ENCODE measurements at regions of chr11 and their contacts with region 1.

Region 1: DNA sequence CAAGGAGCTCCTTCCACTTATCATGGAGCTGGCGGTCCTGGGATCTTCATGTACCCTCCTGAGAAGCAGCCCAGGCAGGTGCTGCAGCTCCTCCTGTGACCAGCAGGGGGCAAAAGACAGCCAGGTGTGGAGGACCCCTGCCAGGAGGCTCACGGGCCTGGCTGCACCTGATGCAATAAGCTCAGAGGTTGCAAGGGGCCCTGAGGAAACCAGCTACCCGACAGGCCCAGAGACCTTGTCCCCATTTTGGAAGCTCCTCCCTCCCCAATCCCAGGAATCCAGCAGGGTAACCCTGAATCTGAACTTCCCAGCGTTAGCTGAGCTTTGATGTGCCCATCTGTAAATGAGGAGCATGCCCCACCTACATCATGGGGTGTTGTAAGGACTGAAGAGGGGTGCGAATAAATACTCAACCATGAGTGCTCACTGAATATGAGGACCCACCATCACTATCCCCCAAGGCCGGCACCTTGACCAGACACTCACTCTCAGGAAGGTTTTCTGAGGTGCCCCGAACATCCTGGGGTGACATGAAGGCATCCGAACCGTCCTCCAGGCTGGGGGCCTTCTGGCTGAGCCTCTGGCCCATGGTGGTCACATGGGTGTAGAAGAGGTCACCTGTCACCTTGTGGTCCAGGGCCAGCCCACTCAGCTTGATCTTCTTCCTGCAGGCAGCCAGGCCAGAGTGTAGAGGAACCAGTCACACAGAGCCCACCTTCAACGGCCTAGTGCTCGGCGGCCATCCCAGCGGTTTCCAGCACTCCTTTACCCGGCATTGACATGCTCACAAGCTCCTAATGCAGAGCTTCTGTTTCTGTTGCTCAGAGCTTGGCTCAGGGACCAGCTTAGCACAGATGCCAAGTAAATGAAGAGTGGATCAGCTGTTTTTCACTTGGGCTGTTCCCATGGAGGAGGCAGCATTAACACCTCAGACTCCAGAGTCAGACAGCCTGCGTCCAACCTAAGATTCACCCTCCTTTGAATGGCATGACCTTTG is 21.7 kb downstream of the SLC43A1 start:
- DNase-seq: peak; percentile 84
- H3K4me3 Mint-ChIP-seq: no peak overlapping the region
- H3K27ac Mint-ChIP-seq: peak overlapping the region; percentile 89
- H3K4me1 Mint-ChIP-seq: peaks cover 13% of the 10 kb centered on the region
- H3K27me3 Mint-ChIP-seq: no peaks in the 10 kb centered on the region

Region 2: GRCh38 chr11:57480409-57481137 is 13.2 kb before region 1 on chr11:
- CTCF ChIA-PET with region 1: interaction called, 92 read pairs
- DNase-seq: peak; percentile 86
- H3K4me3 Mint-ChIP-seq: no peak overlapping the region
- H3K27ac Mint-ChIP-seq: no peak overlapping the region
- H3K4me1 Mint-ChIP-seq: peaks cover 30% of the 10 kb centered on the region
- H3K27me3 Mint-ChIP-seq: peaks cover 83% of the 10 kb centered on the region

Region 3: DNA sequence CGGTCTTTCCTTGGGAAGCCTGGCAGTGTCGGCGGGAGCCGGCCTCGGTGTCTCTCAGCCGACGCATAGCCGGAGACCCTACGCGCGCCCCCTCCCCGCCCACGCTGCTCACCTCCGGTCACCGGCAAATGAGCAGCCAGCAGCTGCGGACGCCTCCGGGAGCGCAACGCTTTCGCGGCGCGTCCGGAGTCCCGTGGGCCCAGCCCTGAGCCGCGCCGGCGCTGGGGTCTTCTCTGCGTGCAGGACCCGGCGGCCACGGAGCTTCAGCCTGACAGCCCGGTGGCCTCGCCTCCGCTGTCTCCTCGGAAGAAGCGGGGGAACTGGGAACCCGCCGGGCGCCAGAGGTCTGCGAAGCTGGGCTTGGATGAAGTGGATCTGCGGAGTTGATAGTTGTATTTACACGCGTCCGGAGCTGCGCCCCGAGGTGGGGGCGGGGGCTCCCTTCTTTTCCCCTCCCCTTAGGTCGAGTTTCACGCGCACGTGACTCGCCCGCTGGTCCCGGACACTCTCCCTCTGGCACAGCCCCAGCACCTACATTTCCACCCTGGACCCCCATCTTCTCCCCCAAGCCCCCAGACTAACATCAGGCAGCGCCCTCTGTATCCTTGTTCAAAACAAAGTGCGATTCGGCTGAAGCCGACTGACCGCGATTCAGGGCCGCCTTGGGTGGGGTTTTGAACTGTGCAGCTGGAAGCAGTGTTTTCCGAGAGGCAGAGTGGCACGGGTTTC is 21.7 kb after region 1 on chr11 and contains the start of gene SLC43A1:
- CTCF ChIA-PET with region 1: interaction called, 115 read pairs
- DNase-seq: peak; percentile 61
- H3K4me3 Mint-ChIP-seq: peak within 1 kb of the TSS; percentile 96
- H3K27ac Mint-ChIP-seq: peak within 1 kb of the TSS; percentile 86
- H3K4me1 Mint-ChIP-seq: peaks cover 34% of the 10 kb centered on the region
- H3K27me3 Mint-ChIP-seq: peaks cover 8% of the 10 kb centered on the region

Region 4: GRCh38 chr11:57567515-57568329 is 73.9 kb after region 1 on chr11 and contains the start of gene UBE2L6:
- CTCF ChIA-PET with region 1: interaction called, 10 read pairs
- DNase-seq: peak; percentile 92
- H3K4me3 Mint-ChIP-seq: peak within 1 kb of the TSS; percentile 100
- H3K27ac Mint-ChIP-seq: peak within 1 kb of the TSS; percentile 99
- H3K4me1 Mint-ChIP-seq: peaks cover 54% of the 10 kb centered on the region
- H3K27me3 Mint-ChIP-seq: peaks cover 8% of the 10 kb centered on the region

Region 5: GRCh38 chr11:57667736-57668435 is 174.1 kb after region 1 on chr11 and contains the start of gene ZDHHC5:
- CTCF ChIA-PET with region 1: no interaction called
- DNase-seq: peak; percentile 100
- H3K4me3 Mint-ChIP-seq: peak within 1 kb of the TSS; percentile 100
- H3K27ac Mint-ChIP-seq: peak within 1 kb of the TSS; percentile 97
- H3K4me1 Mint-ChIP-seq: peaks cover 53% of the 10 kb centered on the region
- H3K27me3 Mint-ChIP-seq: no peaks in the 10 kb centered on the region

Region 6: DNA sequence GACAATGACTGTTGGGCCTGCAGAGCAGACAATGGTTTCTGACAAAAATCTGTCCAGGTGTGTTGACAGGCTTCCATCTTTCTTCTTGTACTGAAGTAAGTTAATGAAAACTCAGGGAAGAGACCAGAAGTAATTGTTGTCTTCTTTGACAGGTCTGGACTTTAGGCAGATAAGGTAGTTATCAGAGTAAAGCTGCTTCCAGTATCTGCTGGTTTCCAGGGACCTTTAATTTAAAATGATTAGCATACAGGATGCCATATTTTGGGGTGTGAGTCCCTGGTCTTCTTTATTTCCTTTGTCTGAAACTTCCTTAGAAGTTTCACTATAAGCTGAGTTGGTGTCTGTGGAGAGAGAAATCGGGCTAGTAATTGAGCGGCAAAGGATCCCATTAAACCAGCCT is 220.0 kb after region 1 on chr11:
- CTCF ChIA-PET with region 1: no interaction called
- DNase-seq: no peak
- H3K4me3 Mint-ChIP-seq: peak overlapping the region; percentile 95
- H3K27ac Mint-ChIP-seq: peak overlapping the region; percentile 1
- H3K4me1 Mint-ChIP-seq: peaks cover 37% of the 10 kb centered on the region
- H3K27me3 Mint-ChIP-seq: no peaks in the 10 kb centered on the region

Measured in activated naive CD4-positive, alpha-beta T cell treated with anti-CD3 and anti-CD28 coated beads, Interleukin-2, amount 10 ng/mL, durations not matched to agents 7 days and 5 days (primary cell).